IMR-90 (cell line): ENCODE measurements at regions of chrX and their contacts with region 1.

Region 1: GRCh38 chrX:104922206-104922621 is 298.3 kb downstream of the TEX13A start:
- DNase-seq: peak; percentile 61
- ATAC-seq: peak; percentile 99
- H3K4me3 ChIP-seq: no peak overlapping the region
- H3K27ac ChIP-seq: no peak overlapping the region
- H3K4me1 ChIP-seq: no peaks in the 10 kb centered on the region
- H3K27me3 ChIP-seq: no peaks in the 10 kb centered on the region
- CTCF ChIP-seq: peak; percentile 97
- POLR2A ChIP-seq: no peak
- RAD21 ChIP-seq: peak; percentile 62

Region 2: GRCh38 chrX:104935581-104935980 is 13.4 kb after region 1 on chrX:
- CTCF ChIA-PET with region 1: interaction called, 10 read pairs
- POLR2A ChIA-PET with region 1: no interaction called
- dilution Hi-C with region 1: no loop called
- in situ Hi-C with region 1: no loop called
- intact Hi-C with region 1: no loop called
- DNase-seq: no peak
- ATAC-seq: no peak
- H3K4me3 ChIP-seq: no peak overlapping the region
- H3K27ac ChIP-seq: no peak overlapping the region
- H3K4me1 ChIP-seq: no peaks in the 10 kb centered on the region
- H3K27me3 ChIP-seq: no peaks in the 10 kb centered on the region
- CTCF ChIP-seq: no peak
- POLR2A ChIP-seq: no peak
- RAD21 ChIP-seq: no peak